Endothelial cell of umbilical vein (primary cell): ENCODE measurements at regions of chr17 and their contacts with region 1.

Region 1: DNA sequence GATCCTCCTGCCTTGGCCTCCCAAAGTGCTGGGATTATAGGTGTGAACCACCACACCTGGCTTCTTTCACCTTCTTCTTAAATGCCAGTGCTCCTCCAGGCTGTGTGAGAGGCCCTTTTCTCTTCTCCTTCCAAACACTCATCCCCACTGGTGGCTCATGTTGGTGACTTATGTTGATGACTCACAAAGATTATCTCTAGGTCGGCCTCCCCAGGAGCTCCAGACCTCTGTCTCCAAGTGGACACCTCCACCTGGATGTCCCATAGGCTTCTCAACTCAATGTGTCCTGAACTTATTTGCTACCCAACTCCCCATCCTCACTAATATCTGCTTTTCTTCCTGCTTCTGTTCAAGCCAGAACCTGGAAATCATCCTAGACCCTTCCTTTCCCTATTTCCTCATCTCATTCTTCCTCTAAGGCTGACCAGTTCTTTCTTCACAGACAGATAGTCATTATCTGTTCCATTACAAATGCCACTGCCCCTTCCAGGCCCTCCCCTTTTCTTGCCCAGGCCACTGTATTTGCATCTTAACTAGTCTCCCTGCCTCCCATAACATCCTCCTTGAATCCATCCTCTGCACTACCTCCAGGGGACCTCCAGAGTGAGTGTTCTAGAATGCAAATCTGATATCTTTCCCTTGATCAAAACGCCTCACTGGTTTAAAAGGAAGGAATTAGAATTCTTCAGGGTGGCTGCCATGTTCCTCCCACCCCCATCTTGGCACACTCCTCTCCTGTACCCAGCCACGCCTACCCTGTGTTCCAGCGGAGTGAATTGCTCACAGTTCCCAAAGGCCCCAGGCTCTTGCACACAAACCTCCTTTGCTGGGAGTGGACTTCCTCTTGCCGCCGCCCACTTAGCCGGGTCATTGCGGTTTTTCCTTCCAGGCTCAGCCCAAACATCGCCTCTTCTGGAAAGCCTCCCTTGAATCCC is 34.8 kb upstream of the FBXO47 start:
- DNase-seq: peak; percentile 35
- H3K4me3 ChIP-seq: no peak overlapping the region
- H3K27ac ChIP-seq: no peak overlapping the region
- H3K4me1 ChIP-seq: peaks cover 11% of the 10 kb centered on the region
- H3K27me3 ChIP-seq: peaks cover 0 to 2% of the 10 kb centered on the region in 2 experiments
- CTCF ChIP-seq: no peak
- POLR2A ChIP-seq: no peak

Region 2: GRCh38 chr17:39036014-39036413 is 34.0 kb after region 1 on chr17:
- CTCF ChIA-PET with region 1: no interaction called
- POLR2A ChIA-PET with region 1: no interaction called
- dilution Hi-C with region 1: no loop called
- intact Hi-C with region 1: no loop called
- DNase-seq: no peak
- H3K4me3 ChIP-seq: no peak overlapping the region
- H3K27ac ChIP-seq: no peak overlapping the region
- H3K4me1 ChIP-seq: no peaks in the 10 kb centered on the region
- H3K27me3 ChIP-seq: peaks cover 6 to 33% of the 10 kb centered on the region in 2 experiments
- CTCF ChIP-seq: no peak
- POLR2A ChIP-seq: no peak

Region 3: GRCh38 chr17:39057701-39058206 is 55.8 kb after region 1 on chr17:
- CTCF ChIA-PET with region 1: interaction called, 3 read pairs
- POLR2A ChIA-PET with region 1: no interaction called
- dilution Hi-C with region 1: no loop called
- intact Hi-C with region 1: loop called (anchors 5 kb)
- DNase-seq: no peak
- H3K4me3 ChIP-seq: no peak overlapping the region
- H3K27ac ChIP-seq: no peak overlapping the region
- H3K4me1 ChIP-seq: no peaks in the 10 kb centered on the region
- H3K27me3 ChIP-seq: peaks cover 6 to 13% of the 10 kb centered on the region in 2 experiments
- CTCF ChIP-seq: no peak
- POLR2A ChIP-seq: no peak

Region 4: GRCh38 chr17:39244600-39245570 is 242.9 kb after region 1 on chr17:
- CTCF ChIA-PET with region 1: no interaction called
- POLR2A ChIA-PET with region 1: no interaction called
- dilution Hi-C with region 1: no loop called
- intact Hi-C with region 1: no loop called
- DNase-seq: peak; percentile 82
- H3K4me3 ChIP-seq: no peak overlapping the region
- H3K27ac ChIP-seq: no peak overlapping the region
- H3K4me1 ChIP-seq: no peaks in the 10 kb centered on the region
- H3K27me3 ChIP-seq: no peaks in the 10 kb centered on the region
- CTCF ChIP-seq: peak; percentile 84 to 92
- POLR2A ChIP-seq: no peak

Region 5: GRCh38 chr17:39281806-39282205 is 279.8 kb after region 1 on chr17:
- CTCF ChIA-PET with region 1: no interaction called
- POLR2A ChIA-PET with region 1: no interaction called
- dilution Hi-C with region 1: no loop called
- intact Hi-C with region 1: no loop called
- DNase-seq: peak; percentile 13
- H3K4me3 ChIP-seq: no peak overlapping the region
- H3K27ac ChIP-seq: no peak overlapping the region
- H3K4me1 ChIP-seq: peaks cover 8% of the 10 kb centered on the region
- H3K27me3 ChIP-seq: no peaks in the 10 kb centered on the region
- CTCF ChIP-seq: no peak
- POLR2A ChIP-seq: no peak